ENCODE measurements at regions of chr17 and their contacts with region 1.

Region 1: GRCh38 chr17:76014184-76014924 is 12.8 kb downstream of the EVPL start:
- DNase-seq: peak; percentile 84
- H3K4me3 Mint-ChIP-seq: no peak overlapping the region
- H3K27ac Mint-ChIP-seq: no peak overlapping the region
- H3K4me1 Mint-ChIP-seq: peaks cover 5% of the 10 kb centered on the region
- H3K27me3 Mint-ChIP-seq: no peaks in the 10 kb centered on the region

Region 2: GRCh38 chr17:76032073-76032779 is 17.9 kb after region 1 on chr17:
- CTCF ChIA-PET with region 1: interaction called, 19 read pairs
- intact Hi-C with region 1: no loop called
- DNase-seq: no peak
- H3K4me3 Mint-ChIP-seq: no peak overlapping the region
- H3K27ac Mint-ChIP-seq: no peak overlapping the region
- H3K4me1 Mint-ChIP-seq: peaks cover 23% of the 10 kb centered on the region
- H3K27me3 Mint-ChIP-seq: no peaks in the 10 kb centered on the region

Region 3: DNA sequence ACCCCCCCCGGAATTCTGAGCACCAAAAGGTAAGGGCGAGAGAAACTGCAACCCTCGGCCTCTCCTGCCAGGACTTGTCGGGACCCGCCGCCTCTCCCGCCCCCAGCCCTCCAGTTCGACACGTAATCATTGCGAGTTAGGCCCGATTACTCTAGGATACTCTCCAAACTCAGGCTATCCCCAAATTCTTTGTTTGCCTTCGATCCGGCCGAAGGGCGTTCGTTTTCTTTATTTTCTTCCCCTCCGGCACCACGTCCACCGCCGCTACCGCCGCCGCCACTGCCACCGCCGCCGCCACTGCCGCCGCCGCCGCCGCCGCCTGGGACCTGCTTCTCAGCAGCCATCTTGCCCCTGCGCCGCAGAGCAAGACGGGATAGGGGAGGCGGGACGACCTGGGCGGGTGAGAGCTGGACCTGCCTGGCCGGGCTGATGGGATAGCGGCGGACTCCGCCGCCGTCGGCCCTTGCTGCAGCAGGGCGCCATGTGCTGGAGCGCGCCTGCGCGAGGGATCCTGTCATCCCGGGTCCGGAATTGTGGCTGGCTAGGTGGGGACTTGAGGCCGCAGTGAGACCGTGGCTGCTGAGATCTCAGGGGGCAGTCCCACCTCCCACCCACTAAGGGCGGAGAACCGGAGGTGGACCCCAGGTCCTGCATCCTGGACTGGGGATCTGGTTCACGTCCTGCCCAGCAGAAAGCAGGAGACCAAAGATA is 57.9 kb after region 1 on chr17 and contains the start of gene SRP68:
- CTCF ChIA-PET with region 1: interaction called, 5 read pairs
- intact Hi-C with region 1: loop called (anchors 1 kb)
- DNase-seq: peak; percentile 86
- H3K4me3 Mint-ChIP-seq: peak within 1 kb of the TSS; percentile 95
- H3K27ac Mint-ChIP-seq: peak within 1 kb of the TSS; percentile 98
- H3K4me1 Mint-ChIP-seq: peaks cover 49% of the 10 kb centered on the region
- H3K27me3 Mint-ChIP-seq: peaks cover 33% of the 10 kb centered on the region
- total RNA-seq, gene SRP68: 127 to 131 TPM

Region 4: GRCh38 chr17:76103274-76104139 is 89.2 kb after region 1 on chr17 and contains the start of gene EXOC7:
- CTCF ChIA-PET with region 1: interaction called, 22 read pairs
- intact Hi-C with region 1: loop called (anchors 1 kb)
- DNase-seq: peak; percentile 95
- H3K4me3 Mint-ChIP-seq: peak within 1 kb of the TSS; percentile 94
- H3K27ac Mint-ChIP-seq: peak within 1 kb of the TSS; percentile 92
- H3K4me1 Mint-ChIP-seq: peaks cover 19% of the 10 kb centered on the region
- H3K27me3 Mint-ChIP-seq: no peaks in the 10 kb centered on the region
- total RNA-seq, gene EXOC7: 43.5 to 46.6 TPM

Region 5: GRCh38 chr17:76278952-76279741 is 264.8 kb after region 1 on chr17:
- CTCF ChIA-PET with region 1: interaction called, 18 read pairs
- intact Hi-C with region 1: loop called (anchors 1 kb)
- DNase-seq: peak; percentile 91
- H3K4me3 Mint-ChIP-seq: no peak overlapping the region
- H3K27ac Mint-ChIP-seq: no peak overlapping the region
- H3K4me1 Mint-ChIP-seq: peaks cover 28% of the 10 kb centered on the region
- H3K27me3 Mint-ChIP-seq: no peaks in the 10 kb centered on the region

Region 6: GRCh38 chr17:76307299-76307965 is 293.1 kb after region 1 on chr17:
- CTCF ChIA-PET with region 1: interaction called, 10 read pairs
- intact Hi-C with region 1: no loop called
- DNase-seq: no peak
- H3K4me3 Mint-ChIP-seq: no peak overlapping the region
- H3K27ac Mint-ChIP-seq: no peak overlapping the region
- H3K4me1 Mint-ChIP-seq: no peaks in the 10 kb centered on the region
- H3K27me3 Mint-ChIP-seq: no peaks in the 10 kb centered on the region

Measured in activated naive CD4-positive, alpha-beta T cell treated with anti-CD3 and anti-CD28 coated beads for 36 hours (primary cell).